ENCODE measurements at regions of chr11 and their contacts with region 1.

Region 1: GRCh38 chr11:64449557-64450167 is 90.7 kb downstream of the RPS6KA4 start:
- DNase-seq: peak; percentile 63 to 78
- ATAC-seq: peak; percentile 92

Region 2: DNA sequence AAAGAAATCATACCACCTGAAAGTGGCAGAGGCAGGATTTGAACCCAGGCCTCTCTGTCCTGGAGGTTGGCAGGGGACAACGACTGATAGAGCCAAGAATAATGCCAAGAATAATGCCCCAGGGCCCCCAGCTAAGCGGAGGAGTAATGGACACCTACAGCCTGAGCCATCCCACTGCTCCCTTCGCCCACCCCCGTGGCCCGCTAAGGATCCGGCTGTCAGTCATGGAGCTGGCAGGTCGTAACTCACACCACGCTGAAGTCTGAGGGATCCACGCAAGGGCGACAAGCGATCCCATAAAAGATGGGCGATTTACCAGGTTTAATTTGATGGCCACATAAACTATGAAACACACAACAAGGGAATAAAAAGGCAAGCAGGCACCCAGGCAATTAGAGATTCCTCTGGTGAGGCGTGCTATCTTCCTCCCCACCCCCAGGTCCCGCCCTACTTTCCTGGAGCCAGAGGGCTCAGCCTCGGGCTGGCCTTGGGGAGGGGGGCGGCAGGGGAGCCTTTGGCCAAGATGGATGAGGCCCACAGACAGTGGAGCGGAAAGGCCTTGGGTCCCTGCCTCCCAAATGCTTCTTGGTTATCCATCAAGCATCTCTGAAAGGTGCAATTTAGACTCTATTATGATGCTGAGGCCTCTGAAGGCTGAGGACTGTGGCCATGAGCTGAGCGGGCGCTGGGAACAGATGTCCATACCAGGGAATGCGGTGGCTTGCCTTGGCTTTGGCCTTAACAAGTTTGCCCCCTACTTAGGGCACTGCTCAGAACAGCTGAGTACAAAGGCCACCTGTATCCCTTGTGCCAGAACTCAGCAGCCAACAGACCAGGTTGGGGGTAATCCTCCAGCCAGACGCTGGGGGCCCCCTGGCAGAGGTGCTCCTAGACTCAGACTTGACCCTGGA is 338.9 kb before region 1 on chr11:
- intact Hi-C with region 1: no loop called
- DNase-seq: no peak
- ATAC-seq: no peak

Region 3: GRCh38 chr11:64652586-64653387 is 203.1 kb after region 1 on chr11:
- intact Hi-C with region 1: loop called in 1 of 2 experiments (anchors 10 kb)
- DNase-seq: peak; percentile 60 to 84
- ATAC-seq: peak; percentile 83

Measured in left colon (tissue), 2 donors.